ENCODE measurements at regions of chr12 and their contacts with region 1.

Region 1: DNA sequence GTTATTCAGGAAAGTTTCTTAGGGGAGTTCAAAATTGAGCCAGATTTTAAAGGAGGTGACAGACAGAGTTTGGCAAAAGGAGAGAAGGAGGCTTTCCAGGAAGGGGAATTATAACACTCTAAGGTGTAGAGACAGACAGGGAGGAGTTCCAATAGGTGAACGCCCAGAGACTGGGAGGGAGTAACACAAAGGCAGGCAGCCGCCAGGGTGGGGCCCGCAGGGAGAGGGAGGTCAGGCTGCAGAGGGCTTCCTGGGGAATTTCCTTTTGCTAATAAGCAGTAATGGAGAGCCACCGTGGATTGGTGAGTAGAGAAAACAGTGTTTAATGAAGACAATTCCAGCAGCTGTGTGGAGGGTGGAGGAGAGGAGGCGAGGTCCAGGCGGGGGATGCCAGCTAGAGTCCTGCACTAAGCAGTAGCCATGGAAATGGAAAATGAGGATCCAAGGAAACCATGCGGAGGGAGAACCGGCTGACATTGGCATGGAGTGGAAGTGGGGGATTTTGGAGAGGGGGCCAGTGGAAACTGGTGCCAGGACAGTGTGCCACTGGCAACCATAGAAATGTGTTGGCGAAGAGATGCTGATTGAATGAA is 22.2 kb downstream of the GRIN2B start:
- DNase-seq: peak in 2 of 10 donors; percentile 50 to 62
- H3K4me3 ChIP-seq: peak overlapping the region in 12 of 59 donors; percentile 0 to 26 (median 10)
- H3K27ac ChIP-seq: peak overlapping the region in 33 of 59 donors; percentile 0 to 75 (median 35)
- H3K27me3 ChIP-seq: peaks cover 0 to 23% (median 0%) of the 10 kb centered on the region in 45 donors
- CTCF ChIP-seq: no peak

Region 2: GRCh38 chr12:13734584-13735152 is 224.6 kb before region 1 on chr12:
- intact Hi-C with region 1: loop called in 1 of 2 experiments (anchors 5 kb)
- DNase-seq: no peak
- H3K4me3 ChIP-seq: no peak overlapping the region
- H3K27ac ChIP-seq: no peak overlapping the region
- H3K27me3 ChIP-seq: no peaks in the 10 kb centered on the region
- CTCF ChIP-seq: no peak

Region 3: GRCh38 chr12:13864081-13864673 is 95.0 kb before region 1 on chr12:
- intact Hi-C with region 1: loop called (anchors 10 kb)
- DNase-seq: peak; percentile 60 to 87 (median 80)
- H3K4me3 ChIP-seq: no peak overlapping the region
- H3K27ac ChIP-seq: no peak overlapping the region
- H3K27me3 ChIP-seq: peaks cover 0 to 13% (median 0%) of the 10 kb centered on the region in 45 donors
- CTCF ChIP-seq: peak; percentile 68 to 96 (median 89)

Region 4: DNA sequence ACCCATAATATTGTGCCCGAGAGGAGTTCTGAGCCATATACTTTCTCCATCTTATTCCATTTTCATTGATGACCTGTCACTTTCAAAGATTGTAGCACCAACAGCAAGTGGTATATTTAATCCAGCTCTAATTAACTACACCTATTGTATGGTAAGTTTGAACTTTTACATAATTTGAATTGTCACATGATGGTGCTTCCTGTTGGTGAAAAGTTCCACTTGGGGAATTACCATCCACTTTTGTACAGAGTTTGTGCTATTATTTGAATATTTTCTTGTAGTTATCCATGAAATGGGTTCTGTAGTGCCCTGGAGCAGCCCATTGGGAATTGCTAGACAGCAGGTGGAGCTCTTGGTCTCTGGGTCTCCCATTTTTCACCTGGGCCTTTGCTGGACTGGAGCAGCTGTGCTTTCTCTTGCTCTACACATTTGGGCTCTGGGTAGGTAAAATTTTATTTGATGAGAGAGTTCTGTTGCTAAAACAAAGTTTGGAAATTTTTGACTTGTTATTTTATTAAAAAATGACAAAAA is 851.8 kb after region 1 on chr12:
- intact Hi-C with region 1: no loop called
- DNase-seq: no peak
- H3K4me3 ChIP-seq: no peak overlapping the region
- H3K27ac ChIP-seq: no peak overlapping the region
- H3K27me3 ChIP-seq: no peaks in the 10 kb centered on the region
- CTCF ChIP-seq: peak in 17 of 56 donors; percentile 10 to 35 (median 18)